GM13976 (cell line): ENCODE measurements at regions of chr7 and their contacts with region 1.

Region 1: DNA sequence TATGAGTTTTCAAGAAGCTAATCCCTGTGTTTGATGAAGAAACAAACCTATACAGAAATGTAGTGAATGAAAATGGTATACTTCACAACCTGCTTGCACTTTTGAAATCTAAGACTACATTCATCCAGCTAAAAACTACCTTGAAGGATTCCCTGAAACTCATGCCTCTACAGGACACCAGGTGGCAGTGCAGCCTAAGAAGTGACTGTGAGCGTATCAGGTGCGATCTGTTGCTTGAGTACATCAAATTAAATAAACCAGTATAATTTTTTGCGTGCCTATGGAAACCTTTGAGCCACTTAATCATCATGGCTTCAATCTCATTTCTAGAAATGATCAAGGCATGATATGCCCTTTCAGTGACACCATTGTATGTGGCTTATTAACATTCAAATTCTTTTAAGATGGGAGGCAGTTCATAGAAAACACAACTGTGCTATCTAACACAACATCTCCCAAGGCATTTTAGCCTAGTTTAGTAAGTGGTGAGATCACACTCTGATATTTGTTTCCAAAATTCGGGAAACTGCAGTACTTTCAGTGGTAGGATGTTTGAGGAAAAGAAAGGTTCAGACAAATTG is 57.4 kb downstream of the PPP1R17 start:
- DNase-seq: peak; percentile 42
- CTCF ChIP-seq: peak; percentile 71

Region 2: GRCh38 chr7:31443457-31443856 is 300.9 kb before region 1 on chr7:
- in situ Hi-C with region 1: loop called (anchors 25 kb)
- DNase-seq: peak; percentile 40
- CTCF ChIP-seq: peak; percentile 68

Region 3: DNA sequence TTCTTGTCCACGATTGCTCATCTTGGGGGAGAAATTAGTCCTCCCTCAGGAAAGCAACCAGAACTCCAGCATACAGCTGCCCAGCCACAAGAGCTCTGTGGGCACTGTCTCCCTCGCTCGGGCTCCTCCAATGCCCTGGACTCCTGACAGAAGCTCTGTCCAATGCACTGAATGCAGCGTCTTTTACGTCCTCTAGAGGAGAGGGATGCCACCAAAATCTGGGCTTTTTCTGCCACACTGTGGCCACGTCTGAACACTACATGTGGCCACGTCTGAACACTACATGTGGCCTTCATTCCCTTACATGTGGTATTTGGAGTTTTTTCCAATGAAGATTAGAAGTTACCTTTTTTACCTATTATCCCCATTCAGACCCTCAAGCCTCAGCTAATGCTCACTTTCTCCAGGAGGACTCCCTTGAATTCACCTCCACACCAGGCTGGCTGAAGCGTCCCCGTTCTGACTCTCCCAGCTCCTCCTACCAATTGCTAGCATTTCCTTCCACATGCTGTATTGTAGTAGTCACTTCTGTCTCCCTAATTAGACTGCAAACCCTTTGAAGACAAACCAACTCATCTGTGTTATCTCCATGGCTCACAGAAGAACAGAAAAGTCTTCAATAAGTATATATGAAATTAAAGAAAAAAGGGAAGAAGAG is 460.1 kb after region 1 on chr7:
- in situ Hi-C with region 1: loop called (anchors 10 kb)
- DNase-seq: peak; percentile 31
- CTCF ChIP-seq: peak; percentile 44

Region 4: GRCh38 chr7:32347244-32347828 is 603.0 kb after region 1 on chr7:
- in situ Hi-C with region 1: loop called (anchors 10 kb)
- DNase-seq: peak; percentile 35
- CTCF ChIP-seq: peak; percentile 57